SK-N-SH (cell line): ENCODE measurements at regions of chr20 and their contacts with region 1.

Region 1: GRCh38 chr20:52312132-52312729 is 120.7 kb upstream of the ZFP64 start:
- DNase-seq: peak; percentile 70
- H3K4me3 ChIP-seq: peak overlapping the region in 1 of 2 experiments; percentile 14; a peak in 1 of 4 replicates
- H3K27ac ChIP-seq: no peak overlapping the region
- H3K4me1 ChIP-seq: peaks cover 0 to 4% of the 10 kb centered on the region in 2 experiments; a peak in 2 of 4 replicates
- H3K27me3 ChIP-seq: no peaks in the 10 kb centered on the region
- CTCF ChIP-seq: peak; percentile 86
- EP300 ChIP-seq: no peak
- RAD21 ChIP-seq: peak; percentile 89

Region 2: GRCh38 chr20:52035977-52036376 is 276.3 kb before region 1 on chr20:
- CTCF ChIA-PET with region 1: no interaction called
- POLR2A ChIA-PET with region 1: no interaction called
- DNase-seq: no peak
- H3K4me3 ChIP-seq: no peak overlapping the region
- H3K27ac ChIP-seq: no peak overlapping the region
- H3K4me1 ChIP-seq: peaks cover 3 to 15% of the 10 kb centered on the region in 2 experiments; a peak in 2 of 4 replicates
- H3K27me3 ChIP-seq: no peaks in the 10 kb centered on the region
- CTCF ChIP-seq: no peak
- EP300 ChIP-seq: no peak
- RAD21 ChIP-seq: no peak

Region 3: DNA sequence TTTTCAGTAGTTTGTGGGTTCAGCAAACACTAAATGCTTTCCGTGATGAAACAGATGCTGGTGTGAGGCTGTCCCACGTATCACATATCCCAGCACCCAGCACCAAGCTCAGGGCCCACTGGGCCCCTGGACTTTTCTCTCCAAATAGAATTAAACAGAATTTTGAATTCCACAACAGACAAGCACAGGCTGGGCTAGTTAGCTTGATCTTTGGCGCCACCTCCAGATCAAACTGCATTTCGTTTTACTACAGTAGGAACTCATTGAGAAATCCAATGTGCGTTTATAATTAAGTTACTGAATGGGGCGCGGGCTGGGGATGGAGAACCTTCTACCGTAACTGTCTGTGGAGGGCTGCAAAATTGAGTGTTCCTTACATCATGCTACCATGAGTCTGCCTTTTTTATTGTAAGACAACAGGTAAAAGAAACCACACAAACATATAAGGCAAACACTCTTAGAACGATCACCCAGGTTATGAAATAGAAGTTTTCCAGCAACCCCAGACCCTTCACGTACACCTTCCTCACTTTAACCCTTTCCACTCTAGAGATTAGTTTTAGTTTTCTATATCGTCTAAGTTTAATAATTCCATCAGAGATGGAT is 228.5 kb before region 1 on chr20:
- CTCF ChIA-PET with region 1: no interaction called
- POLR2A ChIA-PET with region 1: no interaction called
- DNase-seq: peak; percentile 80
- H3K4me3 ChIP-seq: no peak overlapping the region; a peak in 1 of 4 replicates
- H3K27ac ChIP-seq: no peak overlapping the region
- H3K4me1 ChIP-seq: no peaks in the 10 kb centered on the region; a peak in 1 of 4 replicates
- H3K27me3 ChIP-seq: no peaks in the 10 kb centered on the region
- CTCF ChIP-seq: peak; percentile 82
- EP300 ChIP-seq: 0 out of 4 replicates have a peak, but pooled peaks of 1 of the 2 experiments have one; percentile 12
- RAD21 ChIP-seq: peak; percentile 99

Region 4: DNA sequence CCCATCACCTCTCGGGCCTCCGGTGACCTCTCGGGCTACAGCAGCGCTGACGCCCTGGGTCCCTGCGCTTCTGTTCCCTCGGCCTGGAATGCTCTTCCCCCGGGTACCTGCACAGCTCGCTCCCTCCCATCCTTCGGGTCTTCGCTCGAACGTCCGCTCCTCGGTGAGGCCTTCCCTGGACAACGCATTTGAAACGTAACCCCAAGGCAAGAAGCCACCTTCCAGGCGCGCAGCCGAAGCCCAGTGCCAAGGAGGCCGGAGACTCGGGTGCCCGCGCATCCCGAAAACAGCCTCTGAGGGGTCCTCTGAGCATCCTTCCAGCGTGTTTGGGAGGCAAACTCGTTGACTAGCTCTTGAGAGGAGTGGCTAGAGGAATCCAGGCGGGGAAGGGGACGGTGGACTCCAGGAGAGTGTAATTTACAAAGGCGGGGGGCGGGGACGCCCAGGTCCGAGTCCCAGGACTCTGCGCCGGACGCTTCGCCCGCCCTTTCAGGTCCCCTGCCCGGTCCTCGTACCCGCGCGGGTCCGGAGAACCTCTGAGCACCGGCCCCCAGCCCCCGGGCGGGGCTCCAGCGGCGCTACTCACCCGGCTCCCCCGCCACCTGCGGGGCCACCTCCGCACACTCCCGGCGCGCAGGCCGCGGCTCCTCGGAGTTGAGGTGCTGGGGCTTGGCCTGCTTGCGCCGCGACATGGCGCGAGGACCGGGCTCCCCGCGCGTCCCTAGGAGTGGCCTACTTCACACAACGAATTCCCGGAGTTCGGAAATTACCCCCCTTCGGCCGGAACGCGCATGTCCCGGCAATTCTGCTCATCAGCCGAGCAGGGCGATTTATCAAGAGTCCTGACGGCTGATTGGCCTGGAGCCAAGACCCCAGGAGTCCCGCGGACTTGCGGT is 207.4 kb before region 1 on chr20:
- CTCF ChIA-PET with region 1: no interaction called
- POLR2A ChIA-PET with region 1: no interaction called
- DNase-seq: peak; percentile 48
- H3K4me3 ChIP-seq: no peak overlapping the region; a peak in 1 of 4 replicates
- H3K27ac ChIP-seq: no peak overlapping the region
- H3K4me1 ChIP-seq: no peaks in the 10 kb centered on the region
- H3K27me3 ChIP-seq: no peaks in the 10 kb centered on the region
- CTCF ChIP-seq: no peak
- EP300 ChIP-seq: no peak
- RAD21 ChIP-seq: no peak

Region 5: GRCh38 chr20:52242237-52243230 is 69.7 kb before region 1 on chr20:
- CTCF ChIA-PET with region 1: interaction called, 65 read pairs
- POLR2A ChIA-PET with region 1: no interaction called
- DNase-seq: peak; percentile 29
- H3K4me3 ChIP-seq: no peak overlapping the region
- H3K27ac ChIP-seq: no peak overlapping the region
- H3K4me1 ChIP-seq: no peaks in the 10 kb centered on the region; a peak in 2 of 4 replicates
- H3K27me3 ChIP-seq: no peaks in the 10 kb centered on the region; the same call in 1 of the 2 replicates
- CTCF ChIP-seq: peak; percentile 79
- EP300 ChIP-seq: no peak
- RAD21 ChIP-seq: peak; percentile 61

Region 6: GRCh38 chr20:52280407-52280806 is 31.8 kb before region 1 on chr20:
- CTCF ChIA-PET with region 1: interaction called, 15 read pairs
- POLR2A ChIA-PET with region 1: no interaction called
- DNase-seq: no peak
- H3K4me3 ChIP-seq: no peak overlapping the region
- H3K27ac ChIP-seq: no peak overlapping the region
- H3K4me1 ChIP-seq: no peaks in the 10 kb centered on the region; a peak in 2 of 4 replicates
- H3K27me3 ChIP-seq: no peaks in the 10 kb centered on the region
- CTCF ChIP-seq: no peak
- EP300 ChIP-seq: no peak
- RAD21 ChIP-seq: no peak

Region 7: GRCh38 chr20:52340036-52340648 is 27.9 kb after region 1 on chr20:
- CTCF ChIA-PET with region 1: interaction called, 15 read pairs
- POLR2A ChIA-PET with region 1: no interaction called
- DNase-seq: no peak
- H3K4me3 ChIP-seq: no peak overlapping the region; a peak in 1 of 4 replicates
- H3K27ac ChIP-seq: no peak overlapping the region
- H3K4me1 ChIP-seq: no peaks in the 10 kb centered on the region
- H3K27me3 ChIP-seq: no peaks in the 10 kb centered on the region
- CTCF ChIP-seq: no peak
- EP300 ChIP-seq: no peak
- RAD21 ChIP-seq: no peak

Region 8: DNA sequence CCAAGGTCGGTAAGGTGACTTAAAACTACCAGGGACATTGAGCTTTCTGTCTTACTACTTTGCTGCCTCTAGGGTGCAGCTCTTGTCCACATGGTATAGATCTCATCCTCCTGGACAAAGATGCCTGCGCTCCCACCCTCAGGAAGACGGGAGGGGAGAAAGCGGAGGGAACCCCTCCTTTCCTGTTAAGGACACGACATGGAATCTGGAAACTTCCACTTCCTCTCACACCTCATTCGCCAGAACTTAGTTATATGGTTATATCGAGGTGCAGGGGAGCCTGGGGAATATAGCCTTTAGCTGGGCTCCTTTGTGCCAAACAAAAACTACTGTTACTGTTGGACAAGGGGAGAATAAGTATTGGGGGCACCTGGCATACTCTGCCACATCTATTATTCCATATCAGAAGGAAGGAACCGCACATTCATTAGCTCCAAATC is 435.6 kb after region 1 on chr20:
- CTCF ChIA-PET with region 1: interaction called, 15 read pairs
- POLR2A ChIA-PET with region 1: no interaction called
- DNase-seq: peak; percentile 30
- H3K4me3 ChIP-seq: no peak overlapping the region
- H3K27ac ChIP-seq: peak overlapping the region in 1 of 2 experiments; percentile 72; a peak in 2 of 4 replicates
- H3K4me1 ChIP-seq: peaks cover 0 to 20% of the 10 kb centered on the region in 2 experiments; a peak in 2 of 4 replicates
- H3K27me3 ChIP-seq: no peaks in the 10 kb centered on the region
- CTCF ChIP-seq: no peak
- EP300 ChIP-seq: no peak
- RAD21 ChIP-seq: peak; percentile 69

Region 9: DNA sequence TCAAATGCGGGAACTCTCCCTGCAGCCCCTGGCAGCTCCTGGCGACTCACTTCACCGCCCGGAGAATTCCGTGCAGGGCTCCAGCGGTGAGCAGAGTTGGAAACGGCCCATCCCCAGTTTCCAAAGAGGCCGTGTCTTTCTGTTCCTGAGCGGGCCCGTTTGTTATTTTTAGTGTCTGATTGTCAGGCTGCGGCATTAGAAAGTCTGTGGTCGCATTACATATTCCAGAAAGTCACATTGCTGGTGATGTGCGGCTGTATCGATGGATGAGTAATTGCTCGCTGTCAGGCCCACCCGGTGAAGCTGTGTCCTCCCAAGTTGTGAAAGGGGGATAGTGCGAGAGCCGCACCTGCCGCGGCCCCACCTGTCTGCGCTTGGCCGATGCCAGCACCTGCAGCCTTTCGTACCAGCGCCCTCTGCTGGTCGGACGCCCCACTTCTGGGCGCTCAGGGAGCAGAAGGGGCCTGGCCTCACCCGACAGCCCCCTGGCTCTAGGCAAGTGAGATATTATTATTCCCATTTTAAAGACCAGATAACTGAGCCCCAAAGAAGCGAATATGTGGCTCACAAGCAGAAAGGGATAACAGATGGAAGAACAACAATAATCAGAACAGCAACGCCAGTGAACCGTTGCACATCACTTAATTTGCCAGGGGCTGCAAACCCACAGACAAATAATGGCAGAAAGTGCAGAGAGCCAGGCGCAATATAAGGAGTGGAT is 904.8 kb after region 1 on chr20:
- CTCF ChIA-PET with region 1: interaction called, 11 read pairs
- POLR2A ChIA-PET with region 1: no interaction called
- DNase-seq: peak; percentile 79
- H3K4me3 ChIP-seq: peak overlapping the region in 1 of 2 experiments; percentile 23; a peak in 1 of 4 replicates
- H3K27ac ChIP-seq: no peak overlapping the region
- H3K4me1 ChIP-seq: no peaks in the 10 kb centered on the region
- H3K27me3 ChIP-seq: no peaks in the 10 kb centered on the region
- CTCF ChIP-seq: peak; percentile 79
- EP300 ChIP-seq: no peak
- RAD21 ChIP-seq: peak; percentile 71